SK-N-SH (cell line): ENCODE measurements at regions of chr1 and their contacts with region 1.

Region 1: DNA sequence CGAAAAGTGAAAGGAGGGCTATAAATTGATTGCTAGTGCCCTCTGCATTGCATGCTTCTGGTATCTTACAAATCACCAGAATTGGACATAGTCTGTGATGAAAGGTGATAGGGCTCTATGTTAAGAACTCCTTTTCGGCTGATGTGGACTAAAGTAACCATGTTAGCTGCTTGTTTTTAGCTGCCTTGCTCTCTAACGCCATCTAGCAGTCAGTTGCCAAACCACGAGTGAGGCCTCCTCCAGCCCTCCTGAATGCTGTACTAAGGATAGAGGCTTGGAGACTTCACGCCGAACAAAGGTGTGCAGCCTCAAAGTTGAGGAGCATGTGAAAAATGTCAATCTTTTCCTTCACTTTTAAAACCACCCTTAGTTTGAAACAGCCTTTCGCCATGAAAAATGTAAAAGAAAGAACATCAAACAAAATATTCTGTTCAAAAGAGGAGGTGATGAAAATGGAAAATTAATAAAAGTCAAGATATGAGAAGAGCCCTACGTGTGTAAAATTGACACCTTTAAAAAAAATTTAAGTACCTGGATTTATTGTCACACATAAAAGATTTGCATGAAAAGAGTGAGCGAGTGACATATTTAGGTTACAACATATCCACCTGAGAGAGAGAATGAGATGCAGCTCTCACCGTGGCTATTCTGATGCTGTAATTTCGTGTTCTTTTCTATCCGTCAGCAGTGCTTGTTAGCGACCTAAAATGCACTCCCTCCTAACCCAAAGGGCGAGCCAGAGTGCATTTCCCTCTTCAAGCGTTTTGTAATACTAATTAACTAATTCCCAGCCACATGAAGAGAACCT is 8.1 kb downstream of the LRRC53 start:
- DNase-seq: peak; percentile 59
- H3K4me3 ChIP-seq: no peak overlapping the region; a peak in 1 of 4 replicates
- H3K27ac ChIP-seq: peak overlapping the region in 1 of 2 experiments; percentile 95; a peak in 2 of 4 replicates
- H3K4me1 ChIP-seq: peaks cover 0 to 23% of the 10 kb centered on the region in 2 experiments; a peak in 2 of 4 replicates
- H3K27me3 ChIP-seq: no peaks in the 10 kb centered on the region
- CTCF ChIP-seq: peak; percentile 81
- EP300 ChIP-seq: no peak
- RAD21 ChIP-seq: peak; percentile 84

Region 2: DNA sequence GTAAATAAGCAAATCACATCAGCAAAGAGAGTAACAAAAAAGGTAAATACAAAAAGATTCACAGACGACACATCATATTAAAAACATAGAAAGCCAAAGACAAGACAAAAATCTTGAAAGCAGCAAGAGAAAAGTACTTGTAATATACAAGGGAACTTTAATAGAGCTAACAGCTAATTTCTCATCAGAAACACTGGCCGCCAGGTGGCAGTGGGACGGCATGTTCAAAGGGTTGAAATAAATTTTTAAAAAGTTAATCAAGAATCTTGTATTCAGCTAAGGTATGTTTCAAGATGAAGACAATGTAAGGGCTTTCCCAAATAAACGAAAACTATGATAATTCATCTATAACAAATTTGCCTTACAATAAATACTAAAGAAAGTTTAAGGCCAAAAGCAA is 664.4 kb before region 1 on chr1:
- CTCF ChIA-PET with region 1: interaction called, 10 read pairs
- POLR2A ChIA-PET with region 1: no interaction called
- DNase-seq: no peak
- H3K4me3 ChIP-seq: no peak overlapping the region
- H3K27ac ChIP-seq: no peak overlapping the region
- H3K4me1 ChIP-seq: no peaks in the 10 kb centered on the region
- H3K27me3 ChIP-seq: no peaks in the 10 kb centered on the region
- CTCF ChIP-seq: peak; percentile 64
- EP300 ChIP-seq: no peak
- RAD21 ChIP-seq: peak; percentile 67

Region 3: GRCh38 chr1:74480068-74480467 is 24.3 kb before region 1 on chr1:
- CTCF ChIA-PET with region 1: interaction called, 28 read pairs
- POLR2A ChIA-PET with region 1: no interaction called
- DNase-seq: no peak
- H3K4me3 ChIP-seq: no peak overlapping the region
- H3K27ac ChIP-seq: no peak overlapping the region
- H3K4me1 ChIP-seq: no peaks in the 10 kb centered on the region; a peak in 1 of 4 replicates
- H3K27me3 ChIP-seq: no peaks in the 10 kb centered on the region
- CTCF ChIP-seq: no peak
- EP300 ChIP-seq: no peak
- RAD21 ChIP-seq: no peak

Region 4: DNA sequence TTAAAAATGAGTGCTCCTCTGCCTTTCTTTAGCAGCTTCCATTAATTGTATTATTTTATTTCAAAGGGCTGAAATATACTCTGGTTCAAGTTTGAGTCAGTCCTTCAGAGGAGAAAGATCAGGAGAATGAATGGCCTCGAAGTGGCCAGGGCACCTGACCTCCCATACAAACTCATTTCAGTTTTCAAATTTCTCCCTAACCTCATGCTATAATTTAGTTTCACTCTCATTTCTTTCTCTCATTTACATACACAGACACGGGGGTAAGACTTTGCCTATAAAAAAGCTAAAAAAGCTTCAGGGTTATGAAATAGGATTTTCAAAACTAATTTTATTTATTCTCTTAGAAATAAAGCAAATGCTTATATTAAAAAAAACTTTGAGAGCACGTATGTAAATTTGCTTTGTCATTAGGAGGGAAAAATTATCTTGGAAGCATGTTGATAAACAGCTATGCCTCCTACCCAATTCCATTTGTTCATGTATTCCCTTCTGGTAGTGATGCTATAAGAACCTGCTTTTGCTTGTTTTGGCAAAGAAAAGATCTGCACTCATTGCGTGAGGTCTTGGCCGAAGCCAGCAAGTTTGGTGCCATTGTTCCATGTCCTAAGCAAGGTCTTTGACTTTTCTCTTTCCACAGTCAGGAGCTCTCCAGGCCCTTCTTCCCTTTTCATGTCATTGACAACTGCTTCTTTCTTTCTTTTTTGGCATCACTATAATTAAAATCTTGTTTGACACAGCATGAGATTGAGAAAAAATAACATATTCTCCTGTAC is 88.4 kb after region 1 on chr1:
- CTCF ChIA-PET with region 1: interaction called, 19 read pairs
- POLR2A ChIA-PET with region 1: no interaction called
- DNase-seq: no peak
- H3K4me3 ChIP-seq: no peak overlapping the region
- H3K27ac ChIP-seq: peak overlapping the region in 1 of 2 experiments; percentile 93; a peak in 1 of 4 replicates
- H3K4me1 ChIP-seq: peaks cover 0 to 25% of the 10 kb centered on the region in 2 experiments; a peak in 2 of 4 replicates
- H3K27me3 ChIP-seq: no peaks in the 10 kb centered on the region; the same call in 1 of the 2 replicates
- CTCF ChIP-seq: no peak
- EP300 ChIP-seq: no peak
- RAD21 ChIP-seq: no peak

Region 5: DNA sequence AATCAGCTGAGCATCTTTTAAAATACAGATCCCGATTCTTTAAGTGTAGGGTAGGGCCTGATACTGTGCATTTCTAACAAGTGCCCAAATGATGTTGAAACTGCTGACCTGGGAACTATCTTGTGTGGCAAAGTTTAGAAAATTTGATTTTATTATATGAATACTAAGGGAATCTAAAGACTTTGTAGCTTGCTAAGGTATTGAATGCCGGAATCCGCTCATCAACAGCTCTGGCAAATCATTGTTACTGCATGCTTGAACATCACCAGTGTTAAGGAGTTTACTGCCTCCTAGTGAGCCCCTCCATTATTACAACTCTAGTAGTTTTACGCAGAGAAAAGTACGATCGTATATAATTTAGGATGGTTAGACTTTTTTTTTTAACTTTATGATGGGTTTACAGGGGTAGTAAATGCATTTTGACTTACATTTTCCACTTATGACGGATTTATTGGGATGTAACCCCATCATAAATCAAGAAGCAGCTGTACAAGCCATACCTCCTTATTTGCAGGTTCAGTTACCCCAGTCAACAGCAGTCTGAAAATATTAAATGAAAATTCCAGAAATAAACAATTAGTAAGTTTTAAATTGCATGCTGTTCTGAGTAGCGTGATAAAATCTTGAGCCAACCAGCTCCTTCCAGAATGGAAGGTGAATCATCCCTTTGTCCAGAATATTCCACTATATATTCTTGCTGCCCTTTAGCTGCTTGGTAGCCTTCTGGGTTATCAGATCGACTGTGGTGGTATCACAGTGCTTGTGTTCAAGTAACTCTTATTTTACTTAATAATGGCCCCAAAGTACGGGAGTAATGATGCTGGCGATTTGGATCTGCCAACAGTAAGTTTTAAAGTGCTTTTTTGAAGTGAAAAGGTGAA is 229.5 kb after region 1 on chr1:
- CTCF ChIA-PET with region 1: interaction called, 14 read pairs
- POLR2A ChIA-PET with region 1: no interaction called
- DNase-seq: peak; percentile 60
- H3K4me3 ChIP-seq: peak overlapping the region; percentile 91 to 95
- H3K27ac ChIP-seq: peak overlapping the region; percentile 86 to 98
- H3K4me1 ChIP-seq: peaks cover 12 to 24% of the 10 kb centered on the region in 2 experiments
- H3K27me3 ChIP-seq: no peaks in the 10 kb centered on the region
- CTCF ChIP-seq: peak; percentile 78
- EP300 ChIP-seq: no peak
- RAD21 ChIP-seq: peak; percentile 72